ENCODE measurements at regions of chr4 and their contacts with region 1.

Region 1: DNA sequence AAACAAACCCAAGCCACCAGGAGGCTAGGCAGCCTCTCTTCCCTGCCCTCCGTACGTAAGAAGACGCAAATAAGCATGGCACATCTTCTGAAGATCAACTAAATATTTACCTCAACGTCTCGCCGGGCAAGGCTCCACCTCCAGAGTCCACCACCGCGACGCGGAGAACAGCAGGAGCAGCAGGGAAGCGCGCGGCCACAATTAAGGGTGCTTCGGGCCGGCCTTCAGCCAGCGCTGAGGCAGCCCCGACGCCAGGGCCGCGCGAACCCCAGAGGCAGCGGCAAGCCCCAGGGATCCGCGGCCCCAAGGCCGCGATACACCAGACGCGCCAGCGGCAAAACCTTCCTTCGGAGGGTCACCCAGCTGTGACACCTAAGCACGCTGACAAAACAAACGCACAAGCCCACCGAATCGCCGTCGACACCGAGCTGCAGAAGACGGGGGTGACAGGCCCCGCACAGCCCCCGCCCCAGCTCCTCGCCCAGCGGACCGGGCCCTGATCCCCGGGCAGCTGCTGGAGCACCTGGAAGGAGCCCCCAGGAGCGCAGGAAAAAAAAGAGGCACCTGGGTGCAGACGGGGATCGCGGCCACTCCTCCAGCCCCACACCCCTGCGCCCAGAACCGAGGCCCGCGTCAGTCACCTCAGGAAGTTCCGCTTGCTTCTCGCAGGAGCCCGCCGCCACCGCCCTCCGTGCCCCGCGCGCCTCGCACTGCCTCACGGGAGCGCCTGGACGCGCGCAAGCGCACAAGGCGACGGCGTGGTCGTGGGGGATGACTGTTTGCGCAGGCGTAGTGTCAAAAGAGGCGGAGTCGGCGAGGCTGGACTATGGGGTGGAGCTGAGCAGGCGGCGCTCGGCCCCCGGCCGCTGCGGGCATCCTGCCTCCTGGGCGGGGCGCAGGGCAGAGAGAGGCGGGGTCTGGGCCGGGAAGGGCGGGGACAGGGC is at the starts of genes HAUS3 and POLN:
- DNase-seq: peak; percentile 98 to 100 (median 99)
- ATAC-seq: peak; percentile 94 to 99 (median 98)
- H3K4me3 ChIP-seq: peak within 1 kb of the TSS; percentile 89 to 99 (median 94)
- H3K27ac ChIP-seq: peak within 1 kb of the TSS in 11 of 12 donors; percentile 60 to 87 (median 82)
- H3K4me1 ChIP-seq: peaks cover 4 to 82% (median 60%) of the 10 kb centered on the region in 12 donors
- H3K27me3 ChIP-seq: no peaks in the 10 kb centered on the region
- CTCF ChIP-seq: no peak
- POLR2A ChIP-seq: peak; percentile 45 to 89
- total RNA-seq, gene HAUS3: 4.2 to 8.3 (median 6.3) TPM
- total RNA-seq, gene POLN: 0.38 to 4.5 (median 2.6) TPM

Region 2: GRCh38 chr4:2262143-2262943 is 20.7 kb after region 1 on chr4:
- intact Hi-C with region 1: loop called in 2 of 10 experiments (anchors 2 kb)
- DNase-seq: peak; percentile 99 to 100 (median 100)
- ATAC-seq: peak; percentile 94 to 95 (median 95)
- H3K4me3 ChIP-seq: peak overlapping the region; percentile 12 to 96 (median 86)
- H3K27ac ChIP-seq: peak overlapping the region; percentile 94 to 100 (median 98)
- H3K4me1 ChIP-seq: peaks cover 24 to 82% (median 62%) of the 10 kb centered on the region in 12 donors
- H3K27me3 ChIP-seq: no peaks in the 10 kb centered on the region
- CTCF ChIP-seq: no peak
- POLR2A ChIP-seq: peak; percentile 90 to 99

Region 3: DNA sequence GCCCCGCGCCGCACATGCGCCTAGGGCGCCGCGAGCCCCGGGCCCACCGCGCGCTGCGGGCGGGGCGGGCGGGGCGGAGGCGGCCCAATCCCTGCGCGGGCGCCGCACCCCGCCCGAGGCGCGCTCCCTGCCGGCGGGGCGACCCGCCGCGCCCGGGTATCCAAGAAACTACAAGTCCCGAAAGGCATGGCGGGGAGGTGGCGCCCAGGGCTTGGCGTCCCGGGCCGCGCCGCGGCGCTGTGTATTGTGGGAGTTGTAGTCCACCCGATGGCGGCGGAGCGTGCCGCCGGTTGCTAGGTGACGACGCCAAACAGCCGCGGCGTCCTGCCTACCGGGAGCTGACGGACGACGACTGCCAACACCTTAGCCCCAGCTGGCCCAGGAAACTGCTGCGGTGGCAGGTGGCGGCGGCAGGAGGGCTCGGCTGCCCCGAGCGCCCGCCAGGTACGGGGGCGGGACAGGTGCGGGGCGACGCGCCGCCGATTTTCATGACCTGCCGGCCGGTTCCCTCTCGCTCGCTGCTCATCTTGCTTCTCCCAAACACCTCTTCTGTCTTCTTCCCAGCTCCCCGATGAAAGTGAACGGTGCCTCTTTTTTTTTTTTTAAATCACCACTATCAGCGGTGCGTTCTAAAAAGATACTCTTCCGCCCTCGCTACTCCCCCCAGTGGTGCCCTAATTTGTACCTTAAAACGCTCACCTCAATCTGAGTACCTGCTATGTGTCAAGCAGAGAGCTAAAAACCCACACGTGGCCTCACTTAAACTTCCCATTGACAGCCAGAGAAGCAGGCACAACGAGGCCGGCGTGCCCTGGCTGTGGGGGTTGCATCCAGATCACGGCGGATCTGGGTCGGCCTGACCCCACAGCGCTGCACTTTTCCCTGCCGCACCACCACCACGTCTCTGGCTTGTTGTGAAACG is 177.2 kb after region 1 on chr4 and contains the start of gene CFAP99:
- intact Hi-C with region 1: loop called in 5 of 10 experiments (anchors 5 kb)
- DNase-seq: peak; percentile 97 to 99 (median 98)
- ATAC-seq: peak; percentile 95 to 98 (median 96)
- H3K4me3 ChIP-seq: peak within 1 kb of the TSS; percentile 48 to 84 (median 70)
- H3K27ac ChIP-seq: peak within 1 kb of the TSS in 7 of 12 donors; percentile 15 to 39 (median 24)
- H3K4me1 ChIP-seq: peaks cover 5 to 42% (median 22%) of the 10 kb centered on the region in 12 donors
- H3K27me3 ChIP-seq: peaks cover 0 to 41% (median 16%) of the 10 kb centered on the region in 9 donors
- CTCF ChIP-seq: peak in 7 of 12 donors; percentile 6 to 45 (median 23)
- POLR2A ChIP-seq: peak in 1 of 2 donors; percentile 3
- total RNA-seq, gene CFAP99: not detected

Region 4: DNA sequence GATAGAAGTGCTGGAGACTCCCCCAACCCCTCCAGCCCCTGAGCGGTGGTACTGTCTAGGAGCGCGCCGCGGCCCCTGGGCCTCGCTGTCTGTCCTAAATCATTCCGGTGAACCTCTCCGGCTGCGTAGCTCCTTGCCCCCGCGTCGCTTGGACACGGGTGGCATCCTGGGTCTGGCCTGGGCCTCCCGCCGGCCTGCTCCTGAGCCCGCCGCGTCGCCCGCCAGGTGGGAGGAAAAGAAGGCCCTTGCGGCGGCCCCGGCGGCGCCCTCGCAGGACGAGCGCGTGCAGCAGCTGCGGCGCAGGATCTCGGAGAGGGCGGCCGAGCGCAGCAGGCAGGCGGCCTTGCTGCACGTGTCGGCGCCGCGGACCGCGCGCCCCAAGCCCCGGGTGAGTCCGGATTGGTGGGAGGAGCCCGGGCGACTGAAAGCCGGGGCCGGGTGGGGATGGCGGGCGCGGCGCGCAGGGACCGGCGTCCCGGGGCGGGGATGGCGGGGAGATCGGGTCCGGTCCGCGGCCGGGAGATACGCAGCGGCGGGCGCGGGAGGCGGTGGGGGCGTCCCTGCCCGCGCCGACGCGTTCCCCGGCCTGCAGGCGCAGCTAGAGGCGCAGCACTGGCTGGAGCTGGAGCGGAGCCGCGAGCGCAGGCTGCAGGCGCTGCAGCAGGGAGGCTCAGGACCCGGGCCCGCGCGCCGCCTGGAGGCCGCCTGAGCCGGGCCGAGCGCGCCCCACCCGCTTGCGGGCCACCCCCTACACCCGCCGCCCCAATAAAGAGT is 220.7 kb after region 1 on chr4:
- intact Hi-C with region 1: loop called in 1 of 10 experiments (anchors 5 kb)
- DNase-seq: peak; percentile 67 to 84 (median 73)
- ATAC-seq: peak; percentile 68 to 96 (median 90)
- H3K4me3 ChIP-seq: peak overlapping the region; percentile 35 to 80 (median 60)
- H3K27ac ChIP-seq: peak overlapping the region in 9 of 12 donors; percentile 6 to 78 (median 62)
- H3K4me1 ChIP-seq: peaks cover 0 to 18% (median 11%) of the 10 kb centered on the region in 12 donors
- H3K27me3 ChIP-seq: peaks cover 0 to 12% (median 0%) of the 10 kb centered on the region in 9 donors
- CTCF ChIP-seq: peak in 11 of 12 donors; percentile 33 to 79 (median 66)
- POLR2A ChIP-seq: no peak

Region 5: GRCh38 chr4:2478239-2478638 is 236.6 kb after region 1 on chr4:
- intact Hi-C with region 1: no loop called
- DNase-seq: no peak
- ATAC-seq: no peak
- H3K4me3 ChIP-seq: no peak overlapping the region
- H3K27ac ChIP-seq: no peak overlapping the region
- H3K4me1 ChIP-seq: peaks cover 22 to 79% (median 55%) of the 10 kb centered on the region in 12 donors
- H3K27me3 ChIP-seq: no peaks in the 10 kb centered on the region
- CTCF ChIP-seq: no peak
- POLR2A ChIP-seq: no peak

Region 6: GRCh38 chr4:2511645-2512131 is 270.0 kb after region 1 on chr4:
- intact Hi-C with region 1: no loop called
- DNase-seq: peak in 1 of 5 donors; percentile 20
- ATAC-seq: no peak
- H3K4me3 ChIP-seq: no peak overlapping the region
- H3K27ac ChIP-seq: no peak overlapping the region
- H3K4me1 ChIP-seq: peaks cover 0 to 20% (median 11%) of the 10 kb centered on the region in 12 donors
- H3K27me3 ChIP-seq: no peaks in the 10 kb centered on the region
- CTCF ChIP-seq: no peak
- POLR2A ChIP-seq: no peak

Region 7: GRCh38 chr4:2624782-2625530 is 383.3 kb after region 1 on chr4:
- intact Hi-C with region 1: loop called in 1 of 10 experiments (anchors 10 kb)
- DNase-seq: no peak
- ATAC-seq: no peak
- H3K4me3 ChIP-seq: no peak overlapping the region
- H3K27ac ChIP-seq: no peak overlapping the region
- H3K4me1 ChIP-seq: peaks cover 0 to 47% (median 8%) of the 10 kb centered on the region in 12 donors
- H3K27me3 ChIP-seq: no peaks in the 10 kb centered on the region
- CTCF ChIP-seq: no peak
- POLR2A ChIP-seq: no peak

Region 8: DNA sequence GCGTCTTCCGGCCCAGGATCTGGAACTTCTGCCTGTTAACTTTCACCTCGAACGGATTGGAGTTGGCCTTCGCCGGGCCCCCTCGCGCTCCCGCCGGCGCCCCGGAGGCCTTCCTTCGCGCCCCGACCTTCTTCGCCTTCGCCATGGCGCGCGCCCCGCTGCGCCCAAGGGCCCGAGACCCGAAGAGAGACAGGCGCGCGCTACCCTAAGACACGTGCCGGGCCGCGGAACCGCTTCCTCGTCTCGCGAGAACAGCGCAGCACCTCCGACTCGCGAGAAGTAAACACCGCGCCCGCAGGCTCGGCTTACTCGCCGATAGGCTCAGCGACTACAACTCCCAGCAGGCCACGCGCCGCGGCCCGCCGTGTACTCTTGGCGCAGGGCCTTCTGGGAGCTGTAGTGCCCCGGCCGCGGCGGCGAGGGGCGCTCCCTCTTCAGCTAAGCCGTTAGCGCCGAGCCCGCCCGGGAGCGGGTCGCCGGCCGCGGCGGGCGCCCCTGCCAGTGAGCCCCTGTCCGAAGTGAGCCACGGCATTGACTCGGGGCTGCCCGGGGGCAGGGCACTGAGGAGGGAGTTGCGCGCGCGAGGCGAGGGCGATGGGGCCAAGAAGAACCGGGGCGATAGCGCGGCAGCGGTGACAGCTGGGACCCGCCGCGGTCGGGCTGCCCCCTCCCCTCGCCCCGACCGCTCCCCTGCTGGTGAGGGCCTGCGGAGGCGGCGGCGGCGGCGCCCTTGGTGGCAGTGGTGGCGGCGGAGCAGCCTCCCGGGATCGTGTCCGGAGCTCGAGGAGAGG is 721.7 kb after region 1 on chr4 and contains the starts of genes GRK4 and NOP14:
- intact Hi-C with region 1: loop called in 1 of 10 experiments (anchors 10 kb)
- DNase-seq: peak; percentile 98 to 99 (median 99)
- ATAC-seq: peak; percentile 97 to 99 (median 98)
- H3K4me3 ChIP-seq: peak within 1 kb of the TSS; percentile 70 to 100 (median 84)
- H3K27ac ChIP-seq: peak within 1 kb of the TSS; percentile 60 to 92 (median 85)
- H3K4me1 ChIP-seq: peaks cover 4 to 30% (median 23%) of the 10 kb centered on the region in 12 donors
- H3K27me3 ChIP-seq: no peaks in the 10 kb centered on the region
- CTCF ChIP-seq: peak in 9 of 12 donors; percentile 3 to 72 (median 37)
- POLR2A ChIP-seq: peak in 1 of 2 donors; percentile 67
- total RNA-seq, gene GRK4: 4.9 to 11.8 (median 9.3) TPM
- total RNA-seq, gene NOP14: 11.4 to 21.5 (median 15.8) TPM